HepG2 (cell line): ENCODE measurements at regions of chr22 and their contacts with region 1.

Region 1: DNA sequence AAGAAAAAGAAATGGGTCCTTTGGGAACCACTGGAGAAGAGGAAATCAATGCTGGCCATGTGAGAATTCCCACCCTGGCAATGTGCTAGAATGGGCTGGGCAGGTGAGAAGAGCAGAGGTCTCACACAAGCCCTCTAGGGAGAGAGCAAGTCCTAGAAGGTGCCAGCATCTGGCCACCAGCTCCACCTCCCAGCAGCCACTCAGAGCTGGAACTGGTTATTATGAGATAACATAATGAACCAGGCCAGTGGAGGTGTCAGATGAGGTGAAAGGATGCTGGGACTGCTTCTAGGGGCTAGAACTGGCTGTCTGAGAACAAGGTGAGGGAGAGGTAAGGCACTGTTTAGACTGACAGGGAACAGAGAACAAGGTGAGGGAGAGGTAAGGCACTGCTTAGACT is 29.3 kb downstream of the NEFH start:
- DNase-seq: no peak
- ATAC-seq: no peak
- H3K4me3 ChIP-seq: no peak overlapping the region
- H3K27ac ChIP-seq: no peak overlapping the region
- H3K4me1 ChIP-seq: no peaks in the 10 kb centered on the region
- H3K27me3 ChIP-seq: no peaks in the 10 kb centered on the region
- CTCF ChIP-seq: no peak
- EP300 ChIP-seq: no peak
- POLR2A ChIP-seq: no peak
- RAD21 ChIP-seq: no peak

Region 2: DNA sequence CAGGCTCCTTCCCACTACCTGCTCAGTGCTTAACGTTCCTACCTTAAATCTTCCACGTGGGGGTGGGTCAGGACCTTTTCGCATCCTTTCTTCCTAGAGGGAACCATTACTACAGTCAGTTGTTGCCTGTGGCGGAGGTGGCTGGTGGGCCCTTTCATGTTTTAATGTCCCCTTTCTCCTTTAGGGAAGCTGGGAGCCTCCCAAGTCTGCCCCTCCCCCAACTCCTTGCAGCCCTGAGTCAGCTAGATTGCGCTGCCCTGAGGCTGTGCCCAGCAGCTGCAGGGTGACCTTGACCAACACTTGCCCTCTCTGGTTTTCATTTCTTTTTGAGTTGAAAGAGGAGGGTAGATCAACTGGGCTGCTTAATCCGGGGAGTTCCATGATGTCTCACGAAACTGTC is 27.7 kb before region 1 on chr22:
- CTCF ChIA-PET with region 1: no interaction called
- POLR2A ChIA-PET with region 1: no interaction called
- in situ Hi-C with region 1: no loop called
- intact Hi-C with region 1: loop called (anchors 1 kb)
- DNase-seq: no peak
- ATAC-seq: no peak
- H3K4me3 ChIP-seq: no peak overlapping the region
- H3K27ac ChIP-seq: no peak overlapping the region
- H3K4me1 ChIP-seq: peaks cover 13% of the 10 kb centered on the region; the same call in 1 of the 2 replicates
- H3K27me3 ChIP-seq: peaks cover 8 to 31% of the 10 kb centered on the region in 2 experiments; a peak in 4 of 5 replicates
- CTCF ChIP-seq: no peak
- EP300 ChIP-seq: no peak
- POLR2A ChIP-seq: no peak
- RAD21 ChIP-seq: no peak

Region 3: DNA sequence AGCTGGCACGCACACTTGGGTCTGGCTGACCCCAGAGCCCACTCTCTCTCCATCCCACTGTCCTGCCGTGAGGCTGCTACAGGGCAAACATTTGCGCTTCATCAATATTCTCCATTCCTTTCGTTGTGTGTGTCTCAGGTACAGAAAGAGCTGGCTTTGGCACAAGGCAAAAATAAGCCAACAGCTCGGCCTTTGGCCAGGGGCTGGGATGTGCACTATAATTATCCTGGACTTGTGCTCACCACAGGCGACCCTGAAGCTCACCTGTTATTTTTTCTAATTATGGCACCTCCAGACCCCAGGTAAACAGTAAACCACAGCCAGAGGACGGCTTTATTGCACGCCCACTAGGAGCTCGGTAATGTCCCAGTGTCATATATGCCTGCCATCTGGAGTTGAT is 246.6 kb after region 1 on chr22:
- CTCF ChIA-PET with region 1: no interaction called
- POLR2A ChIA-PET with region 1: no interaction called
- in situ Hi-C with region 1: no loop called
- intact Hi-C with region 1: loop called (anchors 5 kb)
- DNase-seq: no peak
- ATAC-seq: no peak
- H3K4me3 ChIP-seq: no peak overlapping the region
- H3K27ac ChIP-seq: no peak overlapping the region
- H3K4me1 ChIP-seq: 0 out of 2 replicates have a peak, but pooled peaks cover 7% of the 10 kb centered on the region
- H3K27me3 ChIP-seq: no peaks in the 10 kb centered on the region
- CTCF ChIP-seq: no peak
- EP300 ChIP-seq: no peak
- POLR2A ChIP-seq: no peak
- RAD21 ChIP-seq: no peak